ENCODE measurements at regions of chr22 and their contacts with region 1.

Region 1: GRCh38 chr22:30089655-30089974 is 9.4 kb downstream of the HORMAD2 start:
- DNase-seq: no peak
- ATAC-seq: no peak
- H3K4me3 ChIP-seq: no peak overlapping the region
- H3K4me3 Mint-ChIP-seq: no peak overlapping the region
- H3K27ac ChIP-seq: no peak overlapping the region
- H3K27ac Mint-ChIP-seq: no peak overlapping the region
- H3K4me1 ChIP-seq: peaks cover 4 to 8% of the 10 kb centered on the region in 2 donors
- H3K4me1 Mint-ChIP-seq: peaks cover 8 to 25% (median 11%) of the 10 kb centered on the region in 7 donors
- H3K27me3 ChIP-seq: no peaks in the 10 kb centered on the region
- H3K27me3 Mint-ChIP-seq: peaks cover 0 to 5% (median 0%) of the 10 kb centered on the region in 5 donors

Region 2: DNA sequence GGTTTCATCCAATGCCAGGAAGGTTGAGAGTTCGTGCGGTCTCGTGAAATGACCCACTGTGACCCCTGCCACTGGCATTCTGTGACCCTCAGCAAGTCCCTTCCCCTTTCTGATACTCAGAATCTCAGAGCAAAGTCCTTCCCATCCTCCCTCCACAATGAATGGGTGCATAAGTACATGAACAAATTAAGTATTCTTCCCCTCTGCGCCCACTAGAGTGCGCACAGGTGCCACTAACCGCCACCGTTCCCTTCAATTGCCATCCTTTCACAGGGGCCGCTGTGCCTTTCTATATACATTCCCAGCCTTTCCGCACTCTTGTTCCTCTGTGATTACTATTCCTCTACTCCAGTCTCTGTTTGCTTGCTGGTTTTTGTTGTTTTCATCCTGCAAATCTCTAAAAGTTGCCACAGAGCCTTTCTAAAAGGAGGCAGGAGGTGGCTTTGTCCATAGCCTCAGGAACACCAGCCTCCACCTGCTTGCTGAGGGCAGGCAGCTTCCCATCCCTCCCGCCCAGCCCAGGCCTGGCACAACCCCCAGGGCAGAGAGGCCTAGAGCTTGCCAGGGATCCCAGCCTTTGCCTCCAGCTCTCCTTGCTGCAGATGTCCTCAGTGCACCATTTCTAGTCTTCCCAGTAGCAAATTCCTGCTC is 694.6 kb before region 1 on chr22:
- CTCF ChIA-PET with region 1: no interaction called
- POLR2A ChIA-PET with region 1: no interaction called
- intact Hi-C with region 1: loop called (anchors 1 to 5 kb)
- DNase-seq: peak; percentile 43 to 70 (median 64)
- ATAC-seq: peak; percentile 98
- H3K4me3 ChIP-seq: no peak overlapping the region
- H3K4me3 Mint-ChIP-seq: peak overlapping the region in 1 of 10 donors; percentile 23
- H3K27ac ChIP-seq: no peak overlapping the region
- H3K27ac Mint-ChIP-seq: peak overlapping the region in 2 of 9 donors; percentile 38 to 52
- H3K4me1 ChIP-seq: no peaks in the 10 kb centered on the region
- H3K4me1 Mint-ChIP-seq: peaks cover 7 to 19% (median 8%) of the 10 kb centered on the region in 7 donors
- H3K27me3 ChIP-seq: no peaks in the 10 kb centered on the region
- H3K27me3 Mint-ChIP-seq: no peaks in the 10 kb centered on the region

Region 3: GRCh38 chr22:29587938-29588699 is 501.5 kb before region 1 on chr22:
- CTCF ChIA-PET with region 1: interaction called, 3 read pairs
- POLR2A ChIA-PET with region 1: no interaction called
- intact Hi-C with region 1: loop called (anchors 1 kb)
- DNase-seq: no peak
- ATAC-seq: no peak
- H3K4me3 ChIP-seq: no peak overlapping the region
- H3K4me3 Mint-ChIP-seq: no peak overlapping the region
- H3K27ac ChIP-seq: no peak overlapping the region
- H3K27ac Mint-ChIP-seq: peak overlapping the region in 5 of 9 donors; percentile 25 to 86 (median 71)
- H3K4me1 ChIP-seq: peaks cover 6 to 8% of the 10 kb centered on the region in 2 donors
- H3K4me1 Mint-ChIP-seq: peaks cover 4 to 11% (median 10%) of the 10 kb centered on the region in 7 donors
- H3K27me3 ChIP-seq: no peaks in the 10 kb centered on the region
- H3K27me3 Mint-ChIP-seq: no peaks in the 10 kb centered on the region

Region 4: GRCh38 chr22:29625090-29625825 is 464.4 kb before region 1 on chr22:
- CTCF ChIA-PET with region 1: no interaction called
- POLR2A ChIA-PET with region 1: no interaction called
- intact Hi-C with region 1: loop called in 1 of 2 experiments (anchors 5 kb)
- DNase-seq: peak in 7 of 9 donors; percentile 15 to 49 (median 40)
- ATAC-seq: peak; percentile 74
- H3K4me3 ChIP-seq: no peak overlapping the region
- H3K4me3 Mint-ChIP-seq: peak overlapping the region in 7 of 10 donors; percentile 2 to 64 (median 25)
- H3K27ac ChIP-seq: peak overlapping the region; percentile 73
- H3K27ac Mint-ChIP-seq: peak overlapping the region; percentile 63 to 89 (median 85)
- H3K4me1 ChIP-seq: peaks cover 0 to 39% of the 10 kb centered on the region in 2 donors
- H3K4me1 Mint-ChIP-seq: peaks cover 41 to 92% (median 85%) of the 10 kb centered on the region in 7 donors
- H3K27me3 ChIP-seq: no peaks in the 10 kb centered on the region
- H3K27me3 Mint-ChIP-seq: no peaks in the 10 kb centered on the region

Region 5: GRCh38 chr22:29635734-29636357 is 453.8 kb before region 1 on chr22:
- CTCF ChIA-PET with region 1: interaction called, 7 read pairs
- POLR2A ChIA-PET with region 1: no interaction called
- intact Hi-C with region 1: loop called in 1 of 2 experiments (anchors 1 kb)
- DNase-seq: peak in 3 of 9 donors; percentile 6 to 22 (median 14)
- ATAC-seq: peak; percentile 48
- H3K4me3 ChIP-seq: no peak overlapping the region
- H3K4me3 Mint-ChIP-seq: no peak overlapping the region
- H3K27ac ChIP-seq: no peak overlapping the region
- H3K27ac Mint-ChIP-seq: no peak overlapping the region
- H3K4me1 ChIP-seq: no peaks in the 10 kb centered on the region
- H3K4me1 Mint-ChIP-seq: peaks cover 22 to 48% (median 36%) of the 10 kb centered on the region in 7 donors
- H3K27me3 ChIP-seq: no peaks in the 10 kb centered on the region
- H3K27me3 Mint-ChIP-seq: no peaks in the 10 kb centered on the region

Region 6: GRCh38 chr22:29689880-29690213 is 399.8 kb before region 1 on chr22:
- CTCF ChIA-PET with region 1: no interaction called
- POLR2A ChIA-PET with region 1: no interaction called
- intact Hi-C with region 1: loop called in 1 of 2 experiments (anchors 5 kb)
- DNase-seq: peak in 6 of 9 donors; percentile 25 to 33 (median 28)
- ATAC-seq: peak; percentile 48
- H3K4me3 ChIP-seq: no peak overlapping the region
- H3K4me3 Mint-ChIP-seq: no peak overlapping the region
- H3K27ac ChIP-seq: no peak overlapping the region
- H3K27ac Mint-ChIP-seq: peak overlapping the region in 6 of 9 donors; percentile 1 to 54 (median 6)
- H3K4me1 ChIP-seq: peaks cover 0 to 5% of the 10 kb centered on the region in 2 donors
- H3K4me1 Mint-ChIP-seq: peaks cover 0 to 38% (median 7%) of the 10 kb centered on the region in 7 donors
- H3K27me3 ChIP-seq: no peaks in the 10 kb centered on the region
- H3K27me3 Mint-ChIP-seq: no peaks in the 10 kb centered on the region

Region 7: GRCh38 chr22:29883045-29883774 is 206.4 kb before region 1 on chr22 and contains the start of gene MTMR3:
- CTCF ChIA-PET with region 1: no interaction called
- POLR2A ChIA-PET with region 1: no interaction called
- intact Hi-C with region 1: loop called in 1 of 2 experiments (anchors 5 kb)
- DNase-seq: peak; percentile 71 to 99 (median 82)
- ATAC-seq: peak; percentile 91
- H3K4me3 ChIP-seq: peak within 1 kb of the TSS; percentile 69
- H3K4me3 Mint-ChIP-seq: peak within 1 kb of the TSS in 7 of 10 donors; percentile 72 to 95 (median 92)
- H3K27ac ChIP-seq: peak within 1 kb of the TSS; percentile 93
- H3K27ac Mint-ChIP-seq: peak within 1 kb of the TSS; percentile 70 to 93 (median 84)
- H3K4me1 ChIP-seq: peaks cover 17 to 21% of the 10 kb centered on the region in 2 donors
- H3K4me1 Mint-ChIP-seq: peaks cover 0 to 12% (median 1%) of the 10 kb centered on the region in 7 donors
- H3K27me3 ChIP-seq: no peaks in the 10 kb centered on the region
- H3K27me3 Mint-ChIP-seq: peaks cover 0 to 3% (median 0%) of the 10 kb centered on the region in 5 donors
- total RNA-seq, gene MTMR3: 33.2 to 88.7 (median 64.6) TPM